HepG2 (cell line): ENCODE measurements at regions of chr19 and their contacts with region 1.

Region 1: DNA sequence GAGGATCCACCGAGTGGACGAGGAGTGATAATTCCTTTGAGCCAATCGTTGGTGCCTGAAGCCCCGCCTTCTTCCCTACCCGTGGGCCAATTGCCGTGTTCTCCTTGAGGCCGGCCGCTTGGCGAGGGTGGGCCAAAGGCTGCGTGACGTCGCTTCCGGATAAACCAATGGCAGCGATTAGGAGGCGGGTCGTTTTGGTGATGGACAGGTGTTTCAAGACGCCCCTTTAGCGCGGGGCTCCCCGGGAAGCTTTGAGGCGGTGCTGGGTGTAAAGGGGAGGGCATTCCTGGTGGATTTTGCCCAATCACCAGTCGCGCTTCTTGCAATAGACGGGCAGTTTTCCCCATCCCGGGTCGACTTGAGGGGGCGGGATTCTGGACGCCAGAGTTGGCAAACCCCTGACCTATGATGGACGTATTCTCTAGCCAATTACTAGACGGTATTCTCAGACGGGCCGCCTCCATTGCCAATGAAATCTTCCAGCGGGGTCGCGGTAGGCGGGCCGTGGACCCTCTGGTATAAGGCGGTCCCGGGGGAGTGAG is 310 bp upstream of the PRMT1 start:
- DNase-seq: peak; percentile 99
- ATAC-seq: peak; percentile 81
- H3K4me3 ChIP-seq: peak overlapping the region; percentile 92 to 99 (median 99); a peak in 5 of 6 replicates
- H3K27ac ChIP-seq: peak overlapping the region; percentile 95
- H3K4me1 ChIP-seq: peaks cover 43% of the 10 kb centered on the region
- H3K27me3 ChIP-seq: no peaks in the 10 kb centered on the region
- CTCF ChIP-seq: no peak
- EP300 ChIP-seq: no peak
- POLR2A ChIP-seq: no peak
- RAD21 ChIP-seq: no peak

Region 2: GRCh38 chr19:49497047-49497788 is 179.5 kb before region 1 on chr19:
- CTCF ChIA-PET with region 1: no interaction called
- POLR2A ChIA-PET with region 1: interaction called, 8 read pairs
- in situ Hi-C with region 1: loop called (anchors 5 kb)
- intact Hi-C with region 1: no loop called
- DNase-seq: no peak
- ATAC-seq: no peak
- H3K4me3 ChIP-seq: peak overlapping the region; percentile 77 to 85 (median 78)
- H3K27ac ChIP-seq: peak overlapping the region; percentile 81
- H3K4me1 ChIP-seq: peaks cover 39% of the 10 kb centered on the region
- H3K27me3 ChIP-seq: peaks cover 0 to 4% of the 10 kb centered on the region in 2 experiments; a peak in 1 of 5 replicates
- CTCF ChIP-seq: no peak
- EP300 ChIP-seq: no peak
- POLR2A ChIP-seq: peak; percentile 66 to 71; a peak in 3 of 4 replicates
- RAD21 ChIP-seq: no peak

Region 3: GRCh38 chr19:49512970-49513745 is 163.6 kb before region 1 on chr19:
- CTCF ChIA-PET with region 1: no interaction called
- POLR2A ChIA-PET with region 1: interaction called, 4 read pairs
- in situ Hi-C with region 1: no loop called
- intact Hi-C with region 1: loop called (anchors 2 kb)
- DNase-seq: peak; percentile 89
- ATAC-seq: peak; percentile 87
- H3K4me3 ChIP-seq: peak overlapping the region; percentile 75 to 89 (median 76)
- H3K27ac ChIP-seq: peak overlapping the region; percentile 89
- H3K4me1 ChIP-seq: peaks cover 38% of the 10 kb centered on the region
- H3K27me3 ChIP-seq: no peaks in the 10 kb centered on the region
- CTCF ChIP-seq: no peak
- EP300 ChIP-seq: peak in 1 of 2 experiments; percentile 11; a peak in 1 of 4 replicates
- POLR2A ChIP-seq: peak; percentile 91 to 97
- RAD21 ChIP-seq: 0 out of 2 replicates have a peak, but pooled peaks have one; percentile 20

Region 4: GRCh38 chr19:49580264-49581006 is 96.3 kb before region 1 on chr19 and contains the start of gene NOSIP:
- CTCF ChIA-PET with region 1: no interaction called
- POLR2A ChIA-PET with region 1: interaction called, 14 read pairs
- in situ Hi-C with region 1: no loop called
- intact Hi-C with region 1: loop called (anchors 2 kb)
- DNase-seq: peak; percentile 93
- ATAC-seq: peak; percentile 94
- H3K4me3 ChIP-seq: peak within 1 kb of the TSS; percentile 75 to 94 (median 88)
- H3K27ac ChIP-seq: peak within 1 kb of the TSS; percentile 61
- H3K4me1 ChIP-seq: peaks cover 35% of the 10 kb centered on the region
- H3K27me3 ChIP-seq: peaks cover 0 to 5% of the 10 kb centered on the region in 2 experiments; a peak in 1 of 5 replicates
- CTCF ChIP-seq: no peak; the same call in 1 of the 2 replicates
- EP300 ChIP-seq: peak; percentile 27 to 57; a peak in 1 of 4 replicates
- POLR2A ChIP-seq: peak; percentile 99 to 100
- RAD21 ChIP-seq: peak; percentile 28; the same call in 1 of the 2 replicates
- total RNA-seq, gene NOSIP: 78.0 and 81.4 TPM in 2 replicates

Region 5: DNA sequence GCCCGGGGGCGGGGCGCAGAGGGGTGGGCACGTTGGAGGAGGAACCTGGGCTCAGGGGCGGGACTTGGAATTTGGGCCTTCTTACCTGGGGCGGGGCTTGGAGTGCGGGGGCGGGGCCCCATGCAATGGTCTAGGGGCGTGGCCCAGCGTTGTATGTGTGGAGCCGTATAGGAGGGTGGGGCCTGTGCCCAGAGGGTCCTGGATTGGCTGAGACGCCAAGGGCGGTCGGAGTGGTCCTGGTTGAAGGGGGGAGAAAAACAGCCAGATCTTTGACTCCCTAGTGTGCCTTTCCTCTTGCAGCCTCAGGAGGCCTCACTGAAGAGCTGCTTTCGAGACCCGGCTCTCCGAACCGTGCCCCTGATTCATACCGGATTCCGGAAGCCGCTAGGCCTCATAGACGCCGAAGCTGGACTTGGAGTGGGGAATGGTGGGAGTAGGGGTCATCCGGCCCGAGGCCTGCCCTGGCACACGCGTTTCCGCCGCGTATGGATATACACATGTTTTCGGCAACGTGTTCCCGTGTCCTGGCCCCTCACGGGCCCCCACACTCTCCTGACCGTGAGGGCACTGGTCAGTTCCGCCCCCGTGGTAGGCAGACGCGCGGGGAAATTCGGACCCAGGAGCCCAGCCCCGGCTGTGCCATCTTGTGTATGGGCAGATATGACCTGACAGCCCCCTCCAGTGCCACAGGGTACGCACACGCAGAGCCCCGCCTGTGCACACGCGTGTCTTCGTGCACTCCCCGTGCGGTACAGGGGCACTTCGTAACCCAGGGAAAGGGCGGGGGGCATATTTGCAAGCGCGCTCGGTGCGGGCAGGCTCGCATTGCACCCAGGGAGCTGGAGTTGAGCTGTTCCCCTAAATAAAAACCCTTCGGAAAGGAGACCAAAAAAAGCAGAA is 86.4 kb before region 1 on chr19:
- CTCF ChIA-PET with region 1: no interaction called
- POLR2A ChIA-PET with region 1: interaction called, 16 read pairs
- in situ Hi-C with region 1: loop called (anchors 10 kb)
- intact Hi-C with region 1: no loop called
- DNase-seq: peak; percentile 97
- ATAC-seq: peak; percentile 92
- H3K4me3 ChIP-seq: peak overlapping the region; percentile 70 to 97 (median 89)
- H3K27ac ChIP-seq: peak overlapping the region; percentile 92
- H3K4me1 ChIP-seq: peaks cover 31% of the 10 kb centered on the region
- H3K27me3 ChIP-seq: no peaks in the 10 kb centered on the region; a peak in 1 of 5 replicates
- CTCF ChIP-seq: 0 out of 2 replicates have a peak, but pooled peaks have one; percentile 21
- EP300 ChIP-seq: no peak
- POLR2A ChIP-seq: peak; percentile 97 to 98
- RAD21 ChIP-seq: 0 out of 2 replicates have a peak, but pooled peaks have one; percentile 11

Region 6: DNA sequence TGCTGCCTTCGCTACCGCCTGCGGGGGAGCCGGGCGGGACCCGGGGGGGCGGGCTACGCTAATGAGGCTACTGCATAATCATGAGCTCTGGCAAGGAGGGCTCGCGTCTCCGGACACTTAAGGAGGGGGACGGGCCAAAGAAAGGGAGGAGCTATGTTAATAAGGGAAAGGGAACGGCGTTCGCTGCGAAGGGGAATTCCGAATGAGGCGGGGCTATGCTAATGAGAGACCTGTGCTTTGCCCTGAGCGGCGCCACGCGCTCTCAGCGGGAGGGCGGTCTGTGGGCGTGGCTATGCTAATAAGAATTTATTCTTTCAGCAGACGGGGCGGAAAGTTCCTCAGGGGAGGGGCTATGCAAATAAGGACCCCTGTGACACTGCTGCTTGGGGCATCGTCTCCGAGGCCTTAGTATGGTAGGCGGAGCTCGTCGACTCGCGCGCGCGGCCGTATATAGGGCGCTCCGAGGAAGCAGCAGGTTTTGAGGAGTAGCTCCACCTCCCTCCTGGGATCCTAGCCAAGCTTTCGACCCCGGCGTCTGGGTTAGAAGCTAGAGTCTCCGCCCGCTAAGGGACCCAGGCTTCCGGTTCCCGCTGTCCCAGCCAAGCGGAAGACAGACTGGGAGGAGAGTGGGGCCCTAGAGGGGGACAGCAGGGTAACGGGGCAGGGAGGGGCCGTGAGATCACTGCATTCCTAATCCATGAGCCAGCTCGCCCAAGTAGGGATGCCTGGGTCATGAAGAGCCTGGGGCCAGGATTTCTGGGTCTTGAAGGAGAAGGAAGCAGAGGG is 36.5 kb before region 1 on chr19 and contains the start of gene RRAS:
- CTCF ChIA-PET with region 1: interaction called, 3 read pairs
- POLR2A ChIA-PET with region 1: interaction called, 77 read pairs
- in situ Hi-C with region 1: no loop called
- intact Hi-C with region 1: loop called (anchors 5 kb)
- DNase-seq: peak; percentile 98
- ATAC-seq: peak; percentile 77
- H3K4me3 ChIP-seq: peak within 1 kb of the TSS; percentile 82 to 89 (median 83)
- H3K27ac ChIP-seq: peak within 1 kb of the TSS; percentile 98
- H3K4me1 ChIP-seq: peaks cover 43% of the 10 kb centered on the region
- H3K27me3 ChIP-seq: no peaks in the 10 kb centered on the region; a peak in 1 of 5 replicates
- CTCF ChIP-seq: no peak
- EP300 ChIP-seq: peak; percentile 37 to 60; a peak in 3 of 4 replicates
- POLR2A ChIP-seq: peak in 1 of 2 experiments; percentile 76; a peak in 3 of 4 replicates
- RAD21 ChIP-seq: no peak
- total RNA-seq, gene RRAS: 0.79 and 1.5 TPM in 2 replicates

Region 7: GRCh38 chr19:49665351-49666119 is 11.2 kb before region 1 on chr19 and contains the starts of genes BCL2L12 and IRF3:
- CTCF ChIA-PET with region 1: no interaction called
- POLR2A ChIA-PET with region 1: interaction called, 36 read pairs
- in situ Hi-C with region 1: no loop called
- intact Hi-C with region 1: no loop called
- DNase-seq: peak; percentile 92
- ATAC-seq: peak; percentile 81
- H3K4me3 ChIP-seq: peak within 1 kb of the TSS; percentile 63 to 96 (median 93)
- H3K27ac ChIP-seq: peak within 1 kb of the TSS; percentile 74
- H3K4me1 ChIP-seq: peaks cover 27% of the 10 kb centered on the region
- H3K27me3 ChIP-seq: no peaks in the 10 kb centered on the region; a peak in 1 of 5 replicates
- CTCF ChIP-seq: peak; percentile 33; the same call in 1 of the 2 replicates
- EP300 ChIP-seq: no peak
- POLR2A ChIP-seq: peak; percentile 32 to 69; a peak in 2 of 4 replicates
- RAD21 ChIP-seq: no peak
- total RNA-seq, gene BCL2L12: 32.6 and 40.8 TPM in 2 replicates
- total RNA-seq, gene IRF3: 61.0 and 65.5 TPM in 2 replicates